Activated CD4-positive, alpha-beta memory T cell treated with anti-CD3 and anti-CD28 coated beads for 36 hours (primary cell): ENCODE measurements at regions of chr20 and their contacts with region 1.

Region 1: GRCh38 chr20:33915726-33916331 is 77.9 kb upstream of the RALY start:
- DNase-seq: peak; percentile 68
- H3K4me3 Mint-ChIP-seq: no peak overlapping the region
- H3K27ac Mint-ChIP-seq: no peak overlapping the region
- H3K4me1 Mint-ChIP-seq: peaks cover 15% of the 10 kb centered on the region
- H3K27me3 Mint-ChIP-seq: no peaks in the 10 kb centered on the region

Region 2: DNA sequence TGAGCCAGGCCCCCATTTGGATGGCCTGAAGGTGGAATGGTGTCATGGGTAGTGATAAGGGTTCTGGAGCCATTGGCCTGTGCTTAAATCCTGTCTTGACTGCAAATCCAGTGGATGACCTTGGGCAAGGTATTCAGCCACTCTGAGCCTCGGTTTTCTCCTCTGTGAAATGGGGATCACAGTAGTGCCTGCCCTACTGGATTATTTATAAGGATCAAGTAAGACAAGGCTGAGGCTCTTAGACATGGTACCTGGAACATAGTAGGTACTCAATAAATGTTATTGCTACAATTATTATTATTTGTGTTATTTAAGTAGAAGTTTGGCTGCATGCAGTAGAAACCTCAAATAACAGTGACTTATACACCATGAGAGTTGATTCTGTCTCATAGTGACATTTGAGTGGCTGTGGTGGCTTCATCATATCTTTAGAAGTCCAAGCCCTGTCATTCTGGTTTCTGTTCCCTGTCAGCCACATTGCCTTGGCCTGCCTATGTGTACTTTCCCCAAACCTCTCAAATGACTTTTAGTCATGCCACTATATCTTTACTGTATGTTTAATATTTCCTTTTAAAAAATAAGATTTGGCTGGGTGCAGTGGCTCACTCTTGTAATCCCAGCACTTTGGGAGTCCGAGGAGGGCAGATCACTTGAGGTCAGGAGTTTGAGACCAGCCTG is 142.3 kb before region 1 on chr20:
- CTCF ChIA-PET with region 1: no interaction called
- POLR2A ChIA-PET with region 1: no interaction called
- intact Hi-C with region 1: loop called (anchors 10 kb)
- DNase-seq: peak; percentile 58
- H3K4me3 Mint-ChIP-seq: no peak overlapping the region
- H3K27ac Mint-ChIP-seq: no peak overlapping the region
- H3K4me1 Mint-ChIP-seq: peaks cover 5% of the 10 kb centered on the region
- H3K27me3 Mint-ChIP-seq: no peaks in the 10 kb centered on the region

Region 3: DNA sequence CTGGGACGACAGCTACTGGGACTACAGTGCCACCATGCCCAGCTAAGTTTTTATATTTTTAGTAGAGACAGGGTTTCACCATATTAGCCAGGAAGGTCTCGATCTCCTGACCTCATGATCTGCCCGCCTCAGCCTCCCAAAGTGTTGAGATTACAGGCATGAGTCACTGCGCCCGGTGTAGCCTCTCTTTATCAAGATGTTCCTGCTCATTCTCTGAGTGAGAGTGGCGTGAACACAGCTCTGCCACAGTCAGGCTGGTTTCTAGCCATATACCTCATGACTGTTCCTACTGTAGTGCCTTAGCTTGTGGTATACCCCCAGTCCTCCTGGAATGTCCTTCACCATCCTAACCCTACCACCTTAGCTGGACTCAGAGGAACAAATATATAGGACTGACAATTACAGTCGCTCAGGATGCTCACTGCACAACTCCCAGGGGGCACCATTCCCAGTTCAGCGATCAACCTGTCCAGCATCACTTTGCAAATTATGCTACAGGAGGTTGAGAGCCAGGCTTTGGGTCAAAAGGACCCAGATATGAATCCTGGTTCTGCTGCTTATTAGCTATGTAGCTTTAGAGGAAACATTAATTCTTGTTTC is 18.4 kb before region 1 on chr20:
- CTCF ChIA-PET with region 1: interaction called, 14 read pairs
- POLR2A ChIA-PET with region 1: no interaction called
- intact Hi-C with region 1: no loop called
- DNase-seq: no peak
- H3K4me3 Mint-ChIP-seq: no peak overlapping the region
- H3K27ac Mint-ChIP-seq: no peak overlapping the region
- H3K4me1 Mint-ChIP-seq: no peaks in the 10 kb centered on the region
- H3K27me3 Mint-ChIP-seq: peaks cover 20% of the 10 kb centered on the region

Region 4: DNA sequence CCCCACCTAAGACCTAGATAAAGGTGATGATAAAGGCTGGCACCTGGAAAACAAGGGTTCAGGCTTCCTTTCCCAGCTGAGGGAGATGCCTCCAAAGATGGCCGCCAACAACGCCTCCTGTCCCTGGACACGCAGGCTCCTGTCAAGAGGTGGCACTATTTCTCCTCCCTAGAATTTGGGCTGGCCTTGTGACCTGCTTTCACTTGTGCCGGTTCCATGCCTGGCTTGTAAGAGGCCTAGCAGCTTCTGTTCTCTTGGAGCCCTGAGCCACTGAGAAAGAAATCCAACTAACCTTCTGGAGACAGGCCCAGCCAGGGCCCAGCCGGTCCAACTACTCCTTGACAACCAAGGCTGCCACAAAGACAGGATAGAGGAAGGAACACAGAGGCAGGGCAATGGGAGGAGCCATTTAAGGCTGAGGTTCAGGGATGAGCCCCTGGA is 17.7 kb after region 1 on chr20:
- CTCF ChIA-PET with region 1: interaction called, 12 read pairs
- POLR2A ChIA-PET with region 1: no interaction called
- intact Hi-C with region 1: no loop called
- DNase-seq: peak; percentile 80
- H3K4me3 Mint-ChIP-seq: no peak overlapping the region
- H3K27ac Mint-ChIP-seq: no peak overlapping the region
- H3K4me1 Mint-ChIP-seq: peaks cover 2% of the 10 kb centered on the region
- H3K27me3 Mint-ChIP-seq: no peaks in the 10 kb centered on the region

Region 5: DNA sequence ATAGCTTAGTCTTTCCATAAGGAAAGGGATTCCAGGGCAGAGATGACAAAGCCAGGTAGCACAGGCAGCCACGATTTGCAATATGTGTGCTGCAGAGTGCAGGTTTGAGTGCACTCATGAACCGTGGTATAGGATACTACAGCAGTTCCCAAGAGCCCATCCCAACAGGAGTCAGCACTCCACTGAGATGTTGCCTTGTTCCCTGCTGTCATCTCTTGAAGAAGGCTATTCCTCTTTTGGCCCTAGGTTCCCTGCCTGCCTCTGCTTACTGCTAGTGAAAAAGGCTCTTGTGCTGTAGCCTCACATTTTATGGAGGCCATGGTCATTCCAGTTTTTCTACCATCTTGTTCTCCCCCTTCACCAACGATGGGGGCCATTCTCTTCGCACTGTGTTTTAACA is 118.1 kb after region 1 on chr20:
- CTCF ChIA-PET with region 1: no interaction called
- POLR2A ChIA-PET with region 1: no interaction called
- intact Hi-C with region 1: no loop called
- DNase-seq: no peak
- H3K4me3 Mint-ChIP-seq: no peak overlapping the region
- H3K27ac Mint-ChIP-seq: no peak overlapping the region
- H3K4me1 Mint-ChIP-seq: peaks cover 57% of the 10 kb centered on the region
- H3K27me3 Mint-ChIP-seq: no peaks in the 10 kb centered on the region

Region 6: DNA sequence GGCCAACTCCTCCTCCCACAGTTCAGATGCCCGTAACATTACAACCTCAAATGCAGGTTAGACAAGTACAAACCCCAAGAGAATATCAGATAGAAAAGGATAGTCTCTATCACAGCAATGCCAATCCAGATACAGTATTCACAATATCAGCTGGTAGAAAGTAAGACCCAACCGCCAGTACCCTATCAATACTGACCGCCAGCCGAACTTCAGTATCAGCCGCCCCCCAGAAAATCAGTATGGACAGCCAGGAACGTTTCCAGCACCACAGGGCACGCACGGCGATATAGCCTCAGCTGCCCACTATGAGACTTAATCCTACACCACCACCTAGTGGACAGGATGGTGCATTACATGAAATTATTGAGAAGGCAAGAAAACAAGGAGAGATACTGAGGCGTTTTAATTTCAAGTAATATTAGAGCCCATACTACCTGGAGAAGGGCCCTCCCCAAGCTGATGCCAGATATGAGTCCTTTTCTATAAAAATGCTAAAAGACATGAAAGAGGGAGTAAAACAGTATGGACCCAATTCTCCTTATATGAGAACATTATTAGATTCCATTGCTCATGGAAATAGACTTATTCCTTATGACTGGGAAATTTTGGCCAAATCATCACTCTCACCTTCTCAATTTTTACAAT is 213.8 kb after region 1 on chr20:
- CTCF ChIA-PET with region 1: interaction called, 36 read pairs
- POLR2A ChIA-PET with region 1: interaction called, 3 read pairs
- intact Hi-C with region 1: loop called (anchors 1 kb)
- DNase-seq: peak; percentile 46
- H3K4me3 Mint-ChIP-seq: peak overlapping the region; percentile 0
- H3K27ac Mint-ChIP-seq: peak overlapping the region; percentile 38
- H3K4me1 Mint-ChIP-seq: peaks cover 7% of the 10 kb centered on the region
- H3K27me3 Mint-ChIP-seq: peaks cover 4% of the 10 kb centered on the region

Region 7: GRCh38 chr20:34180460-34181120 is 264.8 kb after region 1 on chr20:
- CTCF ChIA-PET with region 1: no interaction called
- POLR2A ChIA-PET with region 1: no interaction called
- intact Hi-C with region 1: no loop called
- DNase-seq: no peak
- H3K4me3 Mint-ChIP-seq: no peak overlapping the region
- H3K27ac Mint-ChIP-seq: no peak overlapping the region
- H3K4me1 Mint-ChIP-seq: no peaks in the 10 kb centered on the region
- H3K27me3 Mint-ChIP-seq: peaks cover 12% of the 10 kb centered on the region